Activated T-helper 1 cell treated with anti-CD3 and anti-CD28 coated beads, Interleukin-12 subunit alpha, Interleukin-12 subunit beta, Interleukin-2, Interleukin-4 antibody, amounts not matched to agents 30 ng/mL and 10 ng/mL and 1 ng/mL, durations not matched to agents 14 hours and 24 hours and 36 hours (primary cell): ENCODE measurements at regions of chr3 and their contacts with region 1.

Region 1: DNA sequence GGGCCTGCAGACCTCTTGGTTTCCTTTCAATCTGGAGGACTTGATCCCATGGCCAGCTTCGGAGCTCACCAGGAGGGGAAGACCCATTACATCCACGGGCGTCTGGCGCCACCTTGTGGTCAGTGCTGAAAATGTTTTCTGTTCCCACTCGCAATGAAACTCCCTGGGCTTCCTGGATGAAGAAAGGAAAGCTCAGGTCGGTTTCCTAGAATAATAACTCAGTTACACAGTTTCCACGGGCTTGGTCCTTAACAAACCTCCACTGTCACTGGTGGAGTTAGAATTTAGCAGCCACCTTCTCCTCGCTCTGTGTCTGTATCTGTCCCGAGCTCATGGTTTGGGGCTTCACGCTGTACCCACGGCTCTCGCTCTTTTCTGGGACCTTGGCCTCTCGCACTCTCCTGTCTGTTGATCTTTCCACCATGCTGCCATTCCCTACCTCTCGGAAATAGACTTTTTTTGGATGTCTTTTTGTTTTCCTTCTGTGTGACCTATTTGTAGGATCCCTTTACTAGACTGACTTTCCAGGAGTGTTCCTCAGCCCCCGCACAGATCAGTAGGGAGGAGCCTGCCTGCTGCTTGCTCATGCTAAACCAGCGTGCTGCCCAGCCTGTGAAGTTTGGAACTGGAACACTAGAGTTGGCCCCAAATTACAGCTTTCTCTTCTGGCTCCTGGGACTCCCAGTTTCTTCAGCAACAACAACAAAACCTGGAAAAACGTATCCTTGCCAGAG is 56.3 kb downstream of the IL20RB start:
- DNase-seq: peak; percentile 72
- H3K4me3 Mint-ChIP-seq: peak overlapping the region; percentile 78
- H3K27ac Mint-ChIP-seq: no peak overlapping the region
- H3K4me1 Mint-ChIP-seq: peaks cover 10% of the 10 kb centered on the region
- H3K27me3 Mint-ChIP-seq: no peaks in the 10 kb centered on the region

Region 2: GRCh38 chr3:136250226-136250902 is 763.8 kb before region 1 on chr3 and contains the start of gene PCCB:
- intact Hi-C with region 1: loop called (anchors 5 kb)
- DNase-seq: peak; percentile 88
- H3K4me3 Mint-ChIP-seq: peak within 1 kb of the TSS; percentile 89
- H3K27ac Mint-ChIP-seq: peak within 1 kb of the TSS; percentile 91
- H3K4me1 Mint-ChIP-seq: peaks cover 21% of the 10 kb centered on the region
- H3K27me3 Mint-ChIP-seq: no peaks in the 10 kb centered on the region
- total RNA-seq, gene PCCB: 41.4 and 41.7 TPM in 2 replicates

Region 3: DNA sequence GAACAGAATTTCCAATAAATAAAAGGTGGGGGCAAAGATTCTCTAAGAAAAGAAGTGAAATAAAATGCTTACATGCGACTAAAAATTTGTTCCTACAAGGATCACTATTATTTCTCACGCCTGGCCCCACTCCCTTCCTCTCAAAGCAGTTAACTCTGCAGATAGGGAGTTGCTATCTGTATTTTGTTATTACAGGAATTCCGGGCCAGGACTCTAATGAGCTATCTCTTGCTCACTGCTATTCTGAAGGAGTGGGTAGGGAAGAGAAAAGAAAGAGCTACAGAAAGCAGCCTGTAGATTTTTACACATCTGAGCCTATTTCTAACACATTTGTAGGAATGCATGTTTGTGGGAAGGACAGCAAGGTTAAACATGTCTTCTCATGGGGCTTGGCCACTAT is 623.5 kb before region 1 on chr3:
- intact Hi-C with region 1: loop called (anchors 1 kb)
- DNase-seq: no peak
- H3K4me3 Mint-ChIP-seq: no peak overlapping the region
- H3K27ac Mint-ChIP-seq: no peak overlapping the region
- H3K4me1 Mint-ChIP-seq: no peaks in the 10 kb centered on the region
- H3K27me3 Mint-ChIP-seq: no peaks in the 10 kb centered on the region

Region 4: DNA sequence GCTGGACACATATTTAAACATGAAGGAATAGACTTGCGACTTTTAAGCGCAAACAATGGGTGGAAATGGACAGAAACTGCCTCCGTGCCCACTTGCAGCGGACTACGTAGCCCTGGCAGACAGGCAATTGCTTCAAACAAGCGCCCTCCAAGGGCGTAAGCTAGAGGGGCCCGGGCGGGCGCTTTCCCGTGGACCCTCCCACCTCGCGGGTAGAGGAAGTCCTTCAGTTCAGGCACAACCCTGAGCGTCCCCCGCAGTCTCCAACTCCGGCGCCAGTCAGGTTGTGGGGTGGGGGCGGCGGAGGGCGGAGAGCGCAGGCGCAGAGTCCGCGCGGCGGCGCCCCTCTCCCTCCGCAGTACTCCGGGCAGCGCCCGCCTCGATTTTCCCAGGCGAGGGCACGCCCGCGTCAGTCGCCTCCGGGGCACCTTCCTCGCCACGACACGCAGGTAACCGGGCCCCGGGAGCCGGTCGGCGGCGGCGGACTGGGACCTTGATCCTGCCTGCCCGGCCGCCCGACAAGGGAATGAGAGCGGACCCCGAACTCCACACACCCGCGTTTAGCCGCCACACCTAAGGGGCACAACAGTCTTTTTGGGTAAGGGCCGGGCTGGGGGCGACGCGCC is 195.2 kb before region 1 on chr3 and contains the start of gene SLC35G2:
- intact Hi-C with region 1: loop called (anchors 1 kb)
- DNase-seq: no peak
- H3K4me3 Mint-ChIP-seq: peak within 1 kb of the TSS; percentile 86
- H3K27ac Mint-ChIP-seq: peak within 1 kb of the TSS; percentile 74
- H3K4me1 Mint-ChIP-seq: peaks cover 27% of the 10 kb centered on the region
- H3K27me3 Mint-ChIP-seq: peaks cover 57% of the 10 kb centered on the region
- total RNA-seq, gene SLC35G2: 2.6 and 3.0 TPM in 2 replicates

Region 5: GRCh38 chr3:136949708-136950107 is 64.4 kb before region 1 on chr3:
- intact Hi-C with region 1: loop called (anchors 5 kb)
- DNase-seq: no peak
- H3K4me3 Mint-ChIP-seq: no peak overlapping the region
- H3K27ac Mint-ChIP-seq: no peak overlapping the region
- H3K4me1 Mint-ChIP-seq: peaks cover 14% of the 10 kb centered on the region
- H3K27me3 Mint-ChIP-seq: no peaks in the 10 kb centered on the region

Region 6: GRCh38 chr3:137294139-137294538 is 280.0 kb after region 1 on chr3:
- intact Hi-C with region 1: no loop called
- DNase-seq: no peak
- H3K4me3 Mint-ChIP-seq: no peak overlapping the region
- H3K27ac Mint-ChIP-seq: no peak overlapping the region
- H3K4me1 Mint-ChIP-seq: no peaks in the 10 kb centered on the region
- H3K27me3 Mint-ChIP-seq: no peaks in the 10 kb centered on the region